HepG2 (cell line): ENCODE measurements at regions of chr1 and their contacts with region 1.

Region 1: DNA sequence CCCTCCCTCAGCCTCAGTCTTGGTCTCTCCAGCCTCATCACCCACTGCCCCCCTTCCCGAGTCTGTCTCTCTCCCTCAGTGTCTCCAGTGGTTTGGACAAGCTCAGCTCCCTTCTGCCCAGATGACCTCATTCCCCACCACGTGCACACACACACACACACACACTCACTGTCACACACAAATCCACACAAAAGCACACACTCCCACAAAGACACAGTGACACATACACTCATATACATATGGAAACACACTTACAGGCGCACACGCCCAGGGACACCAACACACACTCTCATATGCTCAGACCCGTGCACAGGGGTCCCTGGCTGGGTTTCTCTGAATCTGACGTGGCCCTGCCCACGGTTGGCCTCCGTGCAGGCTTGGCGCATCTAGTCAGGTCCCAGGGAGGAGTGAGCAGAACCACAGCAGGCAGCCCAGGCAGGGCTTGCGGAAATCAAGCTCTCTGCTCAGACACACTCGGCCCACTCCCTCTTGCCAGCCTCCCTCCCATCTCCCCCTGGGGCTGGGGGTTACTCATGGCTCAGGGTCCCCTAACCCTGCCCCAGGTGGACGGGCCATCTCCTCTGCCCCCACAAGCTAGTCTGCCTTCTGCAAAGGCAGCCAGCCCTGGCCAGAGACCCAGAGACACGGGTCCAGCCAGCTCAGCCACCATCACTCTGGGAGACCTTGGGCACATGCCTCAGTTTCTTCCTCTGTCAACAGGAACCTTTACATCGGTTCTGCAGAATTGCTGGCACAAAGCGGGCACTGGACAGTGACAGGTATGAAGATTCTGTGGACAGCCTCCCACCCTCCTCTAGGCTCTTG is 38.5 kb upstream of the FAM131C start:
- DNase-seq: no peak
- ATAC-seq: peak; percentile 30
- H3K4me3 ChIP-seq: peak overlapping the region in 1 of 3 experiments; percentile 22; a peak in 1 of 6 replicates
- H3K27ac ChIP-seq: no peak overlapping the region
- H3K4me1 ChIP-seq: peaks cover 70% of the 10 kb centered on the region
- H3K27me3 ChIP-seq: peaks cover 5 to 20% of the 10 kb centered on the region in 2 experiments; a peak in 4 of 5 replicates
- CTCF ChIP-seq: no peak
- EP300 ChIP-seq: no peak
- POLR2A ChIP-seq: no peak
- RAD21 ChIP-seq: no peak

Region 2: GRCh38 chr1:16091296-16091695 is 20.7 kb before region 1 on chr1:
- CTCF ChIA-PET with region 1: no interaction called
- POLR2A ChIA-PET with region 1: no interaction called
- in situ Hi-C with region 1: no loop called
- intact Hi-C with region 1: loop called (anchors 2 kb)
- DNase-seq: no peak
- ATAC-seq: no peak
- H3K4me3 ChIP-seq: no peak overlapping the region
- H3K27ac ChIP-seq: no peak overlapping the region
- H3K4me1 ChIP-seq: peaks cover 58% of the 10 kb centered on the region
- H3K27me3 ChIP-seq: peaks cover 2 to 70% of the 10 kb centered on the region in 2 experiments; a peak in 4 of 5 replicates
- CTCF ChIP-seq: no peak
- EP300 ChIP-seq: no peak
- POLR2A ChIP-seq: no peak
- RAD21 ChIP-seq: no peak